ENCODE measurements at regions of chr2 and their contacts with region 1.

Region 1: GRCh38 chr2:8872821-8873432 is 35.5 kb upstream of the KIDINS220 start:
- DNase-seq: peak; percentile 11
- H3K4me3 Mint-ChIP-seq: no peak overlapping the region
- H3K27ac Mint-ChIP-seq: no peak overlapping the region
- H3K4me1 Mint-ChIP-seq: no peaks in the 10 kb centered on the region
- H3K27me3 Mint-ChIP-seq: no peaks in the 10 kb centered on the region
- CTCF ChIP-seq: peak; percentile 47

Region 2: GRCh38 chr2:9114516-9114915 is 241.6 kb after region 1 on chr2:
- CTCF ChIA-PET with region 1: interaction called, 6 read pairs
- intact Hi-C with region 1: loop called (anchors 1 kb)
- DNase-seq: no peak
- H3K4me3 Mint-ChIP-seq: no peak overlapping the region
- H3K27ac Mint-ChIP-seq: no peak overlapping the region
- H3K4me1 Mint-ChIP-seq: peaks cover 18% of the 10 kb centered on the region
- H3K27me3 Mint-ChIP-seq: no peaks in the 10 kb centered on the region
- CTCF ChIP-seq: no peak